ENCODE measurements at regions of chr19 and their contacts with region 1.

Region 1: GRCh38 chr19:13588957-13589833 is 82.9 kb upstream of the CACNA1A start:
- DNase-seq: peak; percentile 86
- ATAC-seq: peak; percentile 98
- H3K4me3 Mint-ChIP-seq: no peak overlapping the region
- H3K27ac Mint-ChIP-seq: no peak overlapping the region
- H3K4me1 Mint-ChIP-seq: no peaks in the 10 kb centered on the region
- H3K27me3 Mint-ChIP-seq: peaks cover 4% of the 10 kb centered on the region
- CTCF ChIP-seq: peak; percentile 93

Region 2: GRCh38 chr19:13277104-13277809 is 311.9 kb before region 1 on chr19:
- CTCF ChIA-PET with region 1: interaction called, 50 read pairs
- POLR2A ChIA-PET with region 1: interaction called, 4 read pairs
- intact Hi-C with region 1: loop called (anchors 2 kb)
- DNase-seq: peak; percentile 78
- ATAC-seq: peak; percentile 94
- H3K4me3 Mint-ChIP-seq: peak overlapping the region; percentile 26
- H3K27ac Mint-ChIP-seq: peak overlapping the region; percentile 80
- H3K4me1 Mint-ChIP-seq: peaks cover 10% of the 10 kb centered on the region
- H3K27me3 Mint-ChIP-seq: peaks cover 4% of the 10 kb centered on the region
- CTCF ChIP-seq: peak; percentile 66

Region 3: DNA sequence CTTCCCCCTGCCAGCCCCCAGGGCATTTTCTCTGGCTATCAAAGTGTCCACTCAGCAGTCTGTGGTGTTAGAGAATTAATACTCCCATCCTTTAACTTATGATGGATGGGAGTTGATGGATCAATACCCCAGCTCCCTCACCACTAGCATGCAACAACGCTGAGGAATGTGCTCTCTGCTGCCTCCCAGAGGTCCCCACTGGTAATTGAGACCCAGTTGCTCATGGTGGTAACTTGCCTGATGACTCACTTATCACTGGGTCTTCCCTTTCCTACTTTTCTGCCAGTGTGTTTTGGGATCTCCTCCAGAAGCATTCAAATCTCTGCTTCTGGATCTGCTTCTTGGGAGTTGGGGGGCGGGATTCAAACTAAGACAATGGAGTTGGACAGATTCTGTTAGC is 62.6 kb before region 1 on chr19:
- CTCF ChIA-PET with region 1: interaction called, 10 read pairs
- POLR2A ChIA-PET with region 1: no interaction called
- intact Hi-C with region 1: no loop called
- DNase-seq: peak; percentile 33
- ATAC-seq: no peak
- H3K4me3 Mint-ChIP-seq: no peak overlapping the region
- H3K27ac Mint-ChIP-seq: no peak overlapping the region
- H3K4me1 Mint-ChIP-seq: no peaks in the 10 kb centered on the region
- H3K27me3 Mint-ChIP-seq: peaks cover 34% of the 10 kb centered on the region
- CTCF ChIP-seq: peak; percentile 54

Region 4: DNA sequence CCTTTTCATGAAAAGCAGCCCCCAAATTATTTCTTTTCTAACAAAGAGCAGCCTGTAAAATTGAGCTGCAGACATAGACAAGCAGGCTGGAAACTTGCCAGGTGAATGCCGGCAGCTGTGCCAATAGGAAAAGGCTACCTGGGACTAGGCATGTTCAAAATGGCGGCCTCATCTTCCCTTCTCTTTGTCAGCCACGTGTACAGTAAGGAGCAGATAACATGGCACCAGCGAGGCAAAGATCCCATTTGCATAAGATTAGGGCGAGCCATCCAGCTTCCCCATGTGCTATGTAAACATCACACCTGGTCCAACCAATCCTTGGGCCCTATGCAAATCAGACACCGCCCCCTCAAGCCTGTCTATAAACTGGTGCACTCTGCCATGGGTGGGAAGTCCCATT is 51.7 kb before region 1 on chr19:
- CTCF ChIA-PET with region 1: no interaction called
- POLR2A ChIA-PET with region 1: no interaction called
- intact Hi-C with region 1: no loop called
- DNase-seq: no peak
- ATAC-seq: no peak
- H3K4me3 Mint-ChIP-seq: no peak overlapping the region
- H3K27ac Mint-ChIP-seq: no peak overlapping the region
- H3K4me1 Mint-ChIP-seq: no peaks in the 10 kb centered on the region
- H3K27me3 Mint-ChIP-seq: peaks cover 17% of the 10 kb centered on the region
- CTCF ChIP-seq: no peak

Region 5: GRCh38 chr19:13604902-13605586 is 15.8 kb after region 1 on chr19:
- CTCF ChIA-PET with region 1: interaction called, 15 read pairs
- POLR2A ChIA-PET with region 1: no interaction called
- intact Hi-C with region 1: no loop called
- DNase-seq: no peak
- ATAC-seq: no peak
- H3K4me3 Mint-ChIP-seq: no peak overlapping the region
- H3K27ac Mint-ChIP-seq: no peak overlapping the region
- H3K4me1 Mint-ChIP-seq: peaks cover 11% of the 10 kb centered on the region
- H3K27me3 Mint-ChIP-seq: peaks cover 5% of the 10 kb centered on the region
- CTCF ChIP-seq: peak; percentile 64